Activated T-helper 1 cell treated with anti-CD3 and anti-CD28 coated beads, Interleukin-12 subunit alpha, Interleukin-12 subunit beta, Interleukin-2, Interleukin-4 antibody, amounts not matched to agents 30 ng/mL and 10 ng/mL and 1 ng/mL, durations not matched to agents 14 hours and 24 hours and 36 hours (primary cell): ENCODE measurements at regions of chr2 and their contacts with region 1.

Region 1: GRCh38 chr2:208254871-208255556 is at the start of gene IDH1:
- DNase-seq: peak; percentile 88
- H3K4me3 Mint-ChIP-seq: peak within 1 kb of the TSS; percentile 99
- H3K27ac Mint-ChIP-seq: peak within 1 kb of the TSS; percentile 89
- H3K4me1 Mint-ChIP-seq: peaks cover 21% of the 10 kb centered on the region
- H3K27me3 Mint-ChIP-seq: peaks cover 2% of the 10 kb centered on the region
- total RNA-seq, gene IDH1: 23.8 and 23.9 TPM in 2 replicates

Region 2: GRCh38 chr2:207710814-207711740 is 543.9 kb before region 1 on chr2 and contains the start of gene CCNYL1:
- intact Hi-C with region 1: loop called (anchors 2 kb)
- DNase-seq: peak; percentile 98
- H3K4me3 Mint-ChIP-seq: peak within 1 kb of the TSS; percentile 96
- H3K27ac Mint-ChIP-seq: peak within 1 kb of the TSS; percentile 76
- H3K4me1 Mint-ChIP-seq: peaks cover 36% of the 10 kb centered on the region
- H3K27me3 Mint-ChIP-seq: no peaks in the 10 kb centered on the region
- total RNA-seq, gene CCNYL1: 6.8 and 8.7 TPM in 2 replicates

Region 3: DNA sequence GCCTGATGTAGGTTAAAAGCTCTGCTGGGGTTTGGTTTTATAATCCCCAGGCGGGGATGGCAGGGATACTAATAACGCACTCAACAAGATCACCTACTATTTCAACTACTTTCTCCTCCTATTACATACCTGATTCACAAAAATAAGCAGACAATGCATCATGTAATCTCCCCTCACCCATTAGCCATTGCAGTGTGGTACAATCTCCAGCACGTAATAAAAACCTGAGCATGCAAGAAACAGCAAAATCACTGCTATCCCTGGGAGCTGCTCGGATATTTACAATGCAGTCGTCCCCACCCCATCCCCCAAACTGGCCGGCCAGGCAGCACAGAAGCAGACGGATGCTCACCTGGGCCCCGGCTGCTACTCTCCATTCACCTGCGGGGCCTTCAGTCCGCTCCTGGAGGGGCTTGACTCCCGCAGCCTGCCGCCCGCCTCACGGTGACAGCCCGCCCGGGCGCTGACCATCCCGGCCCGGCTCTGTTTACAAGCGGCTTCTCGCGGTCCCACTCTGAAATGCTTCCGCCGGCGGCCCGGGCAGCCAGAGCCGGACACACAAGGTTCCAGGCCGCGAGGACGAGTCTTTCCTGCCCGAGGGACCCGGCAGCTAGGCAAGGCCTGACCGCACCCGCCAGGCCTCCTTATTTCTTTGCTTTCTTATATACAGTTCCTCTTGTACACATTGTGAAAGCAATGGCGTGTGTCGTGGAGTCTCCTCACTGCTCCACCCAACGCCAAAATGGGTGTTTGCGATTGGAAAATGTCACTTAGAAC is 229.8 kb before region 1 on chr2 and contains the start of gene PLEKHM3:
- intact Hi-C with region 1: loop called (anchors 5 kb)
- DNase-seq: peak; percentile 73
- H3K4me3 Mint-ChIP-seq: peak within 1 kb of the TSS; percentile 95
- H3K27ac Mint-ChIP-seq: peak within 1 kb of the TSS; percentile 79
- H3K4me1 Mint-ChIP-seq: peaks cover 17% of the 10 kb centered on the region
- H3K27me3 Mint-ChIP-seq: no peaks in the 10 kb centered on the region
- total RNA-seq, gene PLEKHM3: 6.4 and 7.3 TPM in 2 replicates

Region 4: DNA sequence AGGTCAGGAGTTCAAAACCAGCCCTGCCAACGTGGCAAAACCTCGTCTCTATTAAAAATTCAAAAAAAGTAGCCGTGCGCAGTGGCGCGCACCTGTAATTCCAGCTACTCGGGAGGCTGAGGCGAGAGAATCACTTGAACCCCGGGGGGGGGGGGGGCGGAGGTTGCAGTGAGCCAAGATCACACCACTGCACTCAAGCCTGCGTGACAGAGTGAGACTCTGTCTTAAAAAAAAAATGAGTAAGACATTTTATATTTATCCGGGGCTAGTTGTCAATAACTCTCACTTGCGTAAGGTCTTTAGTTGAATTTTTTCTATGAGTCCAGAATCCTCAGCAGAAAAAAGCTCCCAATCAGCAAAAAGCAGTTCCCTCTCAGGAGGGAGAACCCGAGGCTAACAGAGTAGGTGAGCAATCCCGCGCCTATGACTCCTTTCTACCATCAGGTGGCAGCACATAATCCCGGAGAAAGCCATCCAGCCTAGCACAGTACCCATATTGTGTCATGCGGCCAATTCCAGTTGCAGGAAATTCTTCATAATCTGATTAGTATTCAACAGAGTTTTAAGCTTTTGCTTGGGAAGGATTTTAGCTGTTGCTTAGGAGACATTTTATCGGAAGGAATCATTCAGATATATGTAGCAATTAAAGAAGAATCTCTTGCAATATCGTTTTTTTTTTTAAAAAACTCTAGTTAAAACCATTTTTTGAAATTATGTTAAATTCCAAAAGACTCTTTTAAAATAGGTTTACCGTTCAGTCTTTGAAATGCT is 79.8 kb before region 1 on chr2:
- intact Hi-C with region 1: loop called (anchors 1 kb)
- DNase-seq: peak; percentile 36
- H3K4me3 Mint-ChIP-seq: no peak overlapping the region
- H3K27ac Mint-ChIP-seq: no peak overlapping the region
- H3K4me1 Mint-ChIP-seq: peaks cover 6% of the 10 kb centered on the region
- H3K27me3 Mint-ChIP-seq: peaks cover 7% of the 10 kb centered on the region

Region 5: GRCh38 chr2:208306291-208306690 is 51.3 kb after region 1 on chr2:
- intact Hi-C with region 1: no loop called
- DNase-seq: no peak
- H3K4me3 Mint-ChIP-seq: no peak overlapping the region
- H3K27ac Mint-ChIP-seq: no peak overlapping the region
- H3K4me1 Mint-ChIP-seq: peaks cover 3% of the 10 kb centered on the region
- H3K27me3 Mint-ChIP-seq: no peaks in the 10 kb centered on the region

Region 6: DNA sequence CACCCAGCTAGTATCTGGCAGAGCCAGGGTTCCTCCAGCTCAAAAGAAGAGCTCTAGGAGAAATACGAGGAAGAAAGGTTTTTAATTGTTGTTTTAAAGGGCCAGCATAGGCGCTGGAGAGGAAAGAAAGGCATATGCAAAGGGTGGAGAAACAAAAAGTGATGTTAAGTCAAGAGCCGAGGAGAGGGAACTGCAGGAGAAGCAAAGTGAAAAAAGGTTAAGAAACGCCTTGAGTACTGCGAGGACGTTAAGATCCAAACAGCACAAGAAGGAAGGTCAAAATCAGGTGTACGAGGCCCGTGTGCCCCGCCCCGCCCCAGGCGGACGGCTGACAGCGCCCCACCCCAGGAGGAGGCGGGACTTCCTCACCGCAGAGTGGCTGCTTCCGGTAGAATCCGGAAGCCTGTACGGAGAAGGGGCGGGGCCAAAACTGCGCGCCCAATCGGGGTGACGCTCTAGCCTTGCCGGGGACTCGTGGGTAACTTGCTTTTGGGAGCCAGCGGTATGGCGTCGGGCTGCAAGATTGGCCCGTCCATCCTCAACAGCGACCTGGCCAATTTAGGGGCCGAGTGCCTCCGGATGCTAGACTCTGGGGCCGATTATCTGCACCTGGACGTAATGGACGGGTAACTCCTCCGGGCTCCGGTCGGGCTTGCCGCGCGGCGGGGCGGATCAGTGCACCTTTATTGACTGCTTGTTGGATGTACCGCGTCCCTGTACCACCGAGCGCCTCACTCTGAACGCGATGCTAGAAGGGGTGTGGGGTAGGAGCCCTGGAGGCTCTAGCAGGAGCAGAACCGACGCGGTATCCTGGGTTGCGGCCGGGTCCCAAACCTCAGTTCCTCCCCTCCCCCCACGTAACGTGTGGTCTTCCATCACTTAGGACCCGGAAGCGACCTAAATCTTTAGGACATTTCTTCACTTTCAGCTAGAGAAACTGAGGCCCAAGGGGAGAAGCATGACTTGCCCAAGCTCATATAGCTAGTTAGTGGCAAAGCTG is 1747.4 kb after region 1 on chr2 and contains the start of gene RPE:
- intact Hi-C with region 1: loop called (anchors 5 kb)
- DNase-seq: peak; percentile 95
- H3K4me3 Mint-ChIP-seq: peak within 1 kb of the TSS; percentile 96
- H3K27ac Mint-ChIP-seq: peak within 1 kb of the TSS; percentile 93
- H3K4me1 Mint-ChIP-seq: peaks cover 60% of the 10 kb centered on the region
- H3K27me3 Mint-ChIP-seq: no peaks in the 10 kb centered on the region
- total RNA-seq, gene RPE: 56.8 and 58.7 TPM in 2 replicates

Region 7: GRCh38 chr2:210171309-210172203 is 1916.5 kb after region 1 on chr2 and contains the start of gene KANSL1L:
- intact Hi-C with region 1: loop called (anchors 2 kb)
- DNase-seq: peak; percentile 95
- H3K4me3 Mint-ChIP-seq: peak within 1 kb of the TSS; percentile 98
- H3K27ac Mint-ChIP-seq: peak within 1 kb of the TSS; percentile 96
- H3K4me1 Mint-ChIP-seq: peaks cover 30% of the 10 kb centered on the region
- H3K27me3 Mint-ChIP-seq: peaks cover 31% of the 10 kb centered on the region
- total RNA-seq, gene KANSL1L: 3.0 and 3.6 TPM in 2 replicates